AG04449 (cell line): ENCODE measurements at regions of chr6 and their contacts with region 1.

Region 1: DNA sequence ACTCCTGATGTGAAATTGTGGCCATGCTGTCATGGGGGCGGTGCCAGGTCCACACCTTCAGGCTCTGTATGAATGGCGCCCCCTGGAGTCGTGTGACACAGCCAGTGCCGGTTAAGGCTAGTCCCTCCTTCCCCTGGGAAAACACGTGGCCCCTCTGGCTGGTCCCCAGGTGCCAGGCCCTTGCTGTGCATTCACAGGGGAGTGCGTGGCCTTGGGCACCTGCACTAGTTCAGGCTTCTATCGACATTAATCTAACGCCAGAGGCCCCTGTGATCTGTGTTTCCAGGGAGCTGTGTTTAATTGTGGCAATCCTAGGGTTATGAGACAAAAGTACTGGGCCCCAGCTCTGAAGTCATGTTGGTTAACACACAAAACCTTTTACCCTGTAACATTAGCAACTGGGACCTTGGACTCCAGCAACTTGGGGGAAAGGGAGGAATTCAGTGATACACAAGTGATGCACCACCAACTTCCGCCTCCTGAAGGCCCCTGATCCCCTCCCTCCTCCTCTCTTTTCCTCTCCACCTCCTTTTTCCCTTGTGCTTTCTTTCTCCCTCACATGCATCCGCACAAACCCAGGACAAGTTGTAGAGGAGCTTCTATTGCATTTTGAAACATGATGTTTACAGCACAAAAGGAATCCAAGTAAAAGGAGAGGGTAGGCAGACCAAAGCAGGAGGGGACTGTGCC is 74.0 kb downstream of the SSR1 start:
- DNase-seq: no peak
- H3K4me3 ChIP-seq: no peak overlapping the region
- CTCF ChIP-seq: peak; percentile 65

Region 2: DNA sequence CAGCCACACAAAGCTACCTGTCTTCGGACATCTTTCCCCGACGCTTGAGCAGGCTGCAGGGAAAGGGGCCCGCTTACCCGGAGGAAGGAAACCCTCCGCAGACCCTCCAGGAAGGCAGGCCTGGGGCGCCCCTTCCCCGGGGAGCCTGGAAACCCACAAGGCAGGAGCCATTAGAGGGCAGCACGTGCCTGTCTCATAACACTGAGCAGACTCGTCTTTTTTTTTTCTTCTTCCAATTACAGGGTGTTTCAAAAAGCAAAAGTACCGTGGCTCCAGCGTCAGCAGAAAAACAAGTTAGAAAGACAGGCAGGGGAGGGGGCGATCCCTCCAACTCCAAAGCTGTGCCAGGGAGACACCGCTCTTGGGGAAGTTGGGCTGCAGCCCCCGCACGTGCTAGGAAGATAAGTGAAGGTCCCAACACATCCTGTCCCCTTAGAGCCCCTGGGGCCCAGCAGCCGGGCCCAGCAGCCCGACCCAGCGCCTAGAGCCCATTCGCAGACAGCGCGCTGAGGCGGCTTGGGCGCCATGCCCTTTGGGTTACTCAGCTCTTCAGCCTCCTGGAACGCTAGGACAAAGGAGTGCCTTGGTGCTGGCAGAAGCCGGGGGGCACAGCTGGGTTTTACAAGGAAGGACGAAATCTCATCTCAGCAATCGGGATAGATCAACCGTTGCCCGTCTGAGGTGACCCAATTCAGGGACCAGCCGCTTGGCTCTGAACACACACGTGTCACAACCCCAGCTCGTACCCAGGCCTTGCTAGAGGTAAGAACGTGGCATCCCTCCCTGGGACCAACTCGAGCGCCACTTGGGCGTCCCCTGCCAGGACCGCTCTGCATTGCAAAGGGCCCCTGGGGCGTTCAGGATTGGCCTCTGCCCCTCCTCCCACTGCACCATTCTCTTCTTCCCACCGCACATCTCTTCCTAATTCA is 514.2 kb before region 1 on chr6:
- CTCF ChIA-PET with region 1: interaction called, 69 read pairs
- POLR2A ChIA-PET with region 1: no interaction called
- DNase-seq: peak; percentile 26
- H3K4me3 ChIP-seq: peak overlapping the region; percentile 47
- CTCF ChIP-seq: peak; percentile 72

Region 3: DNA sequence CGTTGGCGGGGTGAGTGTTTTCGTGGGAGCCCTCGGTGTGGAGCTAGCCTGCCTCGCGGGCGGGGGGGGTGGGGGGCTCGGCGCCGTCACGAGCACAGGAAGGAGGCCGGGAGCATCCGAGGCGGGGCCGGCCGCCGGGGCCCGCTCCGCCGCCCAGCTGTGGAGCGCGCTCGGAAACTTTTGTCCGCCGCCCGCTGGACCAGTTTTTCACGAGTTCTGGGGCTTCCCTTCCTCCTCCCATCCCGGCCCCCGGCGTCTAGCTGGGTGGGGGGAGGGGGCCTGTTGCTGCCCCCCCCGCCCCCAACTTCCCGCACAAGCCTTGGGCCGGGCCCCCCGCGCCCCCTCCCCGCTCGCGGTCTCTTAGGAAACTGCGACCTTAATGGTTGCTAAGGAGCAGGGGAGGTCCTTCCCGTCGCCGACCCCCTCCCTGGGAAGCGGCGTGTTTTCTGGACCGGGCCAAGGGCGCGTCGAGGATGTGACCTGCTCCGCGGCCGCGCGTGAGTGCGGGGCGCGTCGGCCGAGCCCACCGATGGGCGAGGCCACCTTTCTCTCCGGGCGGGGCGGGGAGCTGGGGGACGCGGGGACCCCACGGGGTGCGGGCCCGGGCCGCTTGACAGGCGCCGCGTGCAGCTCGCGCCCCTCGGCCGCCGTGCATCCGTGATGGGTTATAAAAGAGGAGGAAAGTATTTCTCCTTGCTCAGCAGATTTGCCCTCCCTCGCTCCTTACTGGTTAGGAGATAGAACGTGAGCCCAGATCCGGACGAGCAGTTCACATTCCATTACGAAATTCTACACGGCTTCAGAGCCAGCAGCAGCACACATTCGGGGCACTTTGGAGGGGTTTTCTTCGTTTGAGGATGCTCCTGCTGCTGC is 129.8 kb before region 1 on chr6:
- CTCF ChIA-PET with region 1: interaction called, 16 read pairs
- POLR2A ChIA-PET with region 1: no interaction called
- DNase-seq: no peak
- H3K4me3 ChIP-seq: peak overlapping the region; percentile 86
- CTCF ChIP-seq: no peak

Region 4: GRCh38 chr6:7216941-7217621 is 22.0 kb before region 1 on chr6:
- CTCF ChIA-PET with region 1: interaction called, 12 read pairs
- POLR2A ChIA-PET with region 1: no interaction called
- DNase-seq: no peak
- H3K4me3 ChIP-seq: no peak overlapping the region
- CTCF ChIP-seq: no peak

Region 5: GRCh38 chr6:7254980-7255835 is 16.2 kb after region 1 on chr6:
- CTCF ChIA-PET with region 1: interaction called, 25 read pairs
- POLR2A ChIA-PET with region 1: no interaction called
- DNase-seq: no peak
- H3K4me3 ChIP-seq: no peak overlapping the region
- CTCF ChIP-seq: no peak

Region 6: GRCh38 chr6:7300926-7301325 is 61.9 kb after region 1 on chr6:
- CTCF ChIA-PET with region 1: no interaction called
- POLR2A ChIA-PET with region 1: no interaction called
- DNase-seq: no peak
- H3K4me3 ChIP-seq: no peak overlapping the region
- CTCF ChIP-seq: no peak